ENCODE measurements at regions of chr4 and their contacts with region 1.

Region 1: GRCh38 chr4:170336238-170336775 is 246.6 kb upstream of the AADAT start:
- DNase-seq: peak; percentile 64
- ATAC-seq: peak; percentile 93
- H3K4me3 ChIP-seq: no peak overlapping the region
- H3K27ac ChIP-seq: peak overlapping the region; percentile 34; the same call in 1 of the 2 replicates
- H3K4me1 ChIP-seq: peaks cover 5% of the 10 kb centered on the region; the same call in 1 of the 2 replicates
- H3K27me3 ChIP-seq: no peaks in the 10 kb centered on the region
- CTCF ChIP-seq: peak in 1 of 3 experiments; percentile 10; a peak in 1 of 6 replicates
- EP300 ChIP-seq: peak; percentile 86 to 96
- POLR2A ChIP-seq: no peak
- RAD21 ChIP-seq: no peak

Region 2: GRCh38 chr4:169940450-169940849 is 395.9 kb before region 1 on chr4:
- CTCF ChIA-PET with region 1: no interaction called
- POLR2A ChIA-PET with region 1: no interaction called
- RAD21 ChIA-PET with region 1: no interaction called
- SMC1A ChIA-PET with region 1: no interaction called
- in situ Hi-C with region 1: no loop called
- intact Hi-C with region 1: no loop called
- DNase-seq: no peak
- ATAC-seq: no peak
- H3K4me3 ChIP-seq: no peak overlapping the region
- H3K27ac ChIP-seq: no peak overlapping the region
- H3K4me1 ChIP-seq: no peaks in the 10 kb centered on the region
- H3K27me3 ChIP-seq: no peaks in the 10 kb centered on the region
- CTCF ChIP-seq: no peak
- EP300 ChIP-seq: no peak
- POLR2A ChIP-seq: no peak
- RAD21 ChIP-seq: no peak

Region 3: GRCh38 chr4:170270628-170271027 is 65.7 kb before region 1 on chr4:
- CTCF ChIA-PET with region 1: interaction called, 3 read pairs
- POLR2A ChIA-PET with region 1: no interaction called
- RAD21 ChIA-PET with region 1: no interaction called
- SMC1A ChIA-PET with region 1: interaction called, 8 read pairs
- in situ Hi-C with region 1: no loop called
- intact Hi-C with region 1: loop called (anchors 2 kb)
- DNase-seq: no peak
- ATAC-seq: peak; percentile 72
- H3K4me3 ChIP-seq: no peak overlapping the region
- H3K27ac ChIP-seq: no peak overlapping the region
- H3K4me1 ChIP-seq: no peaks in the 10 kb centered on the region
- H3K27me3 ChIP-seq: no peaks in the 10 kb centered on the region
- CTCF ChIP-seq: no peak
- EP300 ChIP-seq: no peak
- POLR2A ChIP-seq: no peak
- RAD21 ChIP-seq: no peak

Region 4: GRCh38 chr4:170497112-170497511 is 160.8 kb after region 1 on chr4:
- CTCF ChIA-PET with region 1: no interaction called
- POLR2A ChIA-PET with region 1: no interaction called
- RAD21 ChIA-PET with region 1: no interaction called
- SMC1A ChIA-PET with region 1: interaction called, 5 read pairs
- in situ Hi-C with region 1: no loop called
- intact Hi-C with region 1: loop called (anchors 5 kb)
- DNase-seq: peak; percentile 24
- ATAC-seq: peak; percentile 94
- H3K4me3 ChIP-seq: peak overlapping the region; percentile 57
- H3K27ac ChIP-seq: no peak overlapping the region
- H3K4me1 ChIP-seq: no peaks in the 10 kb centered on the region
- H3K27me3 ChIP-seq: no peaks in the 10 kb centered on the region
- CTCF ChIP-seq: peak in 1 of 3 experiments; percentile 67; a peak in 2 of 6 replicates
- EP300 ChIP-seq: no peak
- POLR2A ChIP-seq: no peak
- RAD21 ChIP-seq: peak; percentile 28; the same call in 1 of the 2 replicates

Region 5: GRCh38 chr4:170705907-170706306 is 369.6 kb after region 1 on chr4:
- CTCF ChIA-PET with region 1: no interaction called
- POLR2A ChIA-PET with region 1: no interaction called
- RAD21 ChIA-PET with region 1: no interaction called
- SMC1A ChIA-PET with region 1: no interaction called
- in situ Hi-C with region 1: no loop called
- intact Hi-C with region 1: loop called (anchors 10 kb)
- DNase-seq: peak; percentile 34
- ATAC-seq: peak; percentile 90
- H3K4me3 ChIP-seq: no peak overlapping the region
- H3K27ac ChIP-seq: no peak overlapping the region
- H3K4me1 ChIP-seq: no peaks in the 10 kb centered on the region; the same call in 1 of the 2 replicates
- H3K27me3 ChIP-seq: no peaks in the 10 kb centered on the region
- CTCF ChIP-seq: no peak
- EP300 ChIP-seq: peak; percentile 79 to 82; a peak in 3 of 4 replicates
- POLR2A ChIP-seq: no peak
- RAD21 ChIP-seq: no peak

Region 6: GRCh38 chr4:171644430-171645057 is 1308.2 kb after region 1 on chr4:
- CTCF ChIA-PET with region 1: no interaction called
- POLR2A ChIA-PET with region 1: no interaction called
- RAD21 ChIA-PET with region 1: no interaction called
- SMC1A ChIA-PET with region 1: no interaction called
- in situ Hi-C with region 1: loop called (anchors 25 kb)
- intact Hi-C with region 1: no loop called
- DNase-seq: peak; percentile 63
- ATAC-seq: peak; percentile 86
- H3K4me3 ChIP-seq: no peak overlapping the region
- H3K27ac ChIP-seq: peak overlapping the region; percentile 71
- H3K4me1 ChIP-seq: peaks cover 29% of the 10 kb centered on the region
- H3K27me3 ChIP-seq: no peaks in the 10 kb centered on the region
- CTCF ChIP-seq: no peak
- EP300 ChIP-seq: 0 out of 4 replicates have a peak, but pooled peaks of 1 of the 2 experiments have one; percentile 13
- POLR2A ChIP-seq: no peak
- RAD21 ChIP-seq: no peak

Measured in GM12878 (cell line).